ENCODE measurements at regions of chr17 and their contacts with region 1.

Region 1: GRCh38 chr17:49343273-49343672 is 18.8 kb downstream of the ZNF652 start:
- DNase-seq: no peak
- ATAC-seq: peak; percentile 30
- H3K4me3 Mint-ChIP-seq: peak overlapping the region; percentile 72
- H3K27ac Mint-ChIP-seq: peak overlapping the region; percentile 89
- H3K4me1 Mint-ChIP-seq: peaks cover 65% of the 10 kb centered on the region
- H3K27me3 Mint-ChIP-seq: no peaks in the 10 kb centered on the region
- CTCF ChIP-seq: no peak

Region 2: DNA sequence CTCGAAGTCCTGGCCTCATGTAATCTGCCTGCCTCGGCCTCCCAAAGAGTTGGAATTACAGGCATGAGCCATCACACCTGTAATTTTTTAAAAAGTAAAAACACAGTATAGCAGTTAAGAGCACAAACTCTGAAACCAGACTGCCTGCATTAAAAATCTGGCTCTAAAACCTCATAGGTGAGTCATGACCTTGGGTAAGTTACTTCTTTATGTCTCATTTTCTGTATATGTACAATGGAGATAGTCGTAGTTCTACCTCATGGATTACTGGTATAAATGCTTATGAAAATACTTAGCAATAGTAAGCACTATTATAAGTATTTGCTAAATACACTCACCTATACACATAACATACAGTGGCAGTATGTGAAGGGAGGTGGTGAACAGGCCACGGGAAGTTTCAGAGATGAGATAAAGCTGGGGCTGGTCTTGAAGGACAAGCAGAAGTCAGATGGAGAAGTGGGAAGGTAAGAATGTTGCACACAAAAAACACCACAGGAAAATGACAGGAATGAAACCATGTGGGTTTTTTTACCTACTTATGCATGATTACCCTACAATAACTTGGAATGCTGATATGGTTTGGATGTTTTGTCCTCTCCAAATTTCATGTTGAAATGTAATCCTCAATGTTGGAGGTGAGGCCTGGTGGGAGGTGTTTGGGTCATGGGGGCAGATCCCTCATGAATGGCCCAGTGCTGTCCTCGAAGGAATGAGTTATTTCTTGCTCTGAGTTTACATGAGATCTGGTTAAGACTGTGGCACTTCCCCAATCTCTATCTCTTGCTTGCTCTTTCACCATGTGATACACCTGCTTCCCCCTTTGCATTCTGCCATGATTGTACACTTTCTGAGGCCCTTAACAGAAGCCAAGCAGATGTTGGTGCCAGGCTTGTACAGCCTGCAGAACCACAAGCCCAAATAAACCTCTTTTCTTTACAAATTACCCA is 15.2 kb before region 1 on chr17:
- CTCF ChIA-PET with region 1: no interaction called
- POLR2A ChIA-PET with region 1: interaction called, 4 read pairs
- intact Hi-C with region 1: loop called (anchors 2 kb)
- DNase-seq: no peak
- ATAC-seq: peak; percentile 95
- H3K4me3 Mint-ChIP-seq: no peak overlapping the region
- H3K27ac Mint-ChIP-seq: peak overlapping the region; percentile 81
- H3K4me1 Mint-ChIP-seq: peaks cover 44% of the 10 kb centered on the region
- H3K27me3 Mint-ChIP-seq: no peaks in the 10 kb centered on the region
- CTCF ChIP-seq: no peak

Region 3: DNA sequence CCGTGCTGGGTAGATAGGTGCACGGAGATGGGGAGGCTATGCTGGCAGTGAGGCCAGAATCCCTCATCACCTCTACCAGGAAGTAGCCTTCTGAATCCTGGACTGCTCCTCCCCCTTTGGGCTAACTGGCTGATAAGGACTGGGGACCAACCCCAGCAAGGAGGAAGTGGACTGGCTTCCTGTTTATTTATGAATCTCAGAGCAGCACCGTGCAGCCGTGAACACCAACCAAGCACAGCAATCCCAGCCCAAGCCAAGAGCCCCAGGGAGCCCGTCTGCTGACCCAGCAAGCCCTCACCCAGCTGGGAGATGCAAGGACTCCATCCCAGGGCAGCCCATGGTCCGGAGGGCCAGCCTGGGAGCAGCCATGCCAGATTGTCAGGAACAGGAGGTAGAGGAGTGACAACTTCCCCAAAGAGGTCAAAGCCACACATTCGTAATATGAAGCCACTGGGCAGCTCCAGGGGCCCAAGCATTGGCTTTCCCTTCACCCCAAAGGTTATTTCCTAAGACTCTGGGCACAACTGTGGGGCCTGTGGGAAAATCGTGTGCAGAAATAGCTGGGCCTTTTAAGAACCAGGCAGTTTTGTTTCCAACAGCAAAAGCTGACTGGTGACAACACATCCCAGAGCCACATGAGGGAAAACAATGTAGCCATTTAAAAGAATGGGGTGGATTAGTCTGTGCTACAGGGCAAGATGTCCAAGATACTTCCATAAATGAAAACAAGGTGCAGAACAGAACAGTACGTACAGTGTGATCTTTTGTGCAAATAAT is 47.5 kb after region 1 on chr17:
- CTCF ChIA-PET with region 1: interaction called, 4 read pairs
- POLR2A ChIA-PET with region 1: interaction called, 33 read pairs
- intact Hi-C with region 1: no loop called
- DNase-seq: peak; percentile 29
- ATAC-seq: peak; percentile 51
- H3K4me3 Mint-ChIP-seq: peak overlapping the region; percentile 77
- H3K27ac Mint-ChIP-seq: peak overlapping the region; percentile 98
- H3K4me1 Mint-ChIP-seq: peaks cover 77% of the 10 kb centered on the region
- H3K27me3 Mint-ChIP-seq: no peaks in the 10 kb centered on the region
- CTCF ChIP-seq: no peak